Transverse colon (tissue), 4 donors: ENCODE measurements at regions of chr10 and their contacts with region 1.

Region 1: DNA sequence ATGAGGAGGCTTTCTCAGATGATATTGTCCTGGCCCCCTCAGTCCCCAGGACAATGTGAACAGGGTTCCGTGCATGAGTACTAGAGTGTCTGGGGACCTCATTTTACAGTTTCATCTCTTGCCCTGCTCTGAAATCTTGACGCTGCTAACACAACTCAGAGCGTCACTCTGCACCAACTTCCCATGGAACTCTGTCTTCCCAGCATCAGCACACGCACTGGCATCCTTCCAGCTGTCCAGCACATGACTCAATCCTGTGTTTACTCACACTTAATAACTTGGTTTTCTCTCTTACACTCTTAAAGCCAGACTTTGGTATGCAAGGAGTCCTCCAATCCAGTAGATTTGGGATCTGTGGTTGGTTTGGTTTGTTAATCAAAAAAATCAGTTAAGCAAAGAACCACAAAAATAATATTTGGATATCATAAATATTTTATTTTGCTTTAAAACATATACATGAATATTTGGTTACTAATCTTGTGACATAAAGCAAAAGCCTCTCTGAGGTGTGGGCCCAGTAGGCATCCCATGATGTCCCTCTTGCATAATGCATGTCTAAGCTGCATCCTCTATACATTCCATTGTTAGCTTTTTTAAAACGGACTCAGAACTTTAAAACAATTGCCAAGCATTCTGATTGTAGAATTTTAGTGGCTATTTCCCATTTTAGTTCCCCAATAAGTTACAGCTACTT is 131.0 kb downstream of the CXCL12 start:
- DNase-seq: no peak
- H3K4me3 ChIP-seq: no peak overlapping the region
- H3K27ac ChIP-seq: no peak overlapping the region
- H3K4me1 ChIP-seq: peaks cover 0 to 10% (median 1%) of the 10 kb centered on the region in 4 donors
- H3K27me3 ChIP-seq: no peaks in the 10 kb centered on the region
- CTCF ChIP-seq: no peak
- EP300 ChIP-seq: no peak
- POLR2A ChIP-seq: no peak

Region 2: GRCh38 chr10:44233561-44234482 is 20.1 kb before region 1 on chr10:
- in situ Hi-C with region 1: no loop called
- intact Hi-C with region 1: loop called (anchors 2 kb)
- DNase-seq: peak; percentile 15
- H3K4me3 ChIP-seq: no peak overlapping the region
- H3K27ac ChIP-seq: peak overlapping the region in 2 of 4 donors; percentile 29 to 53
- H3K4me1 ChIP-seq: peaks cover 0 to 4% (median 0%) of the 10 kb centered on the region in 4 donors
- H3K27me3 ChIP-seq: no peaks in the 10 kb centered on the region
- CTCF ChIP-seq: no peak
- EP300 ChIP-seq: no peak
- POLR2A ChIP-seq: no peak

Region 3: DNA sequence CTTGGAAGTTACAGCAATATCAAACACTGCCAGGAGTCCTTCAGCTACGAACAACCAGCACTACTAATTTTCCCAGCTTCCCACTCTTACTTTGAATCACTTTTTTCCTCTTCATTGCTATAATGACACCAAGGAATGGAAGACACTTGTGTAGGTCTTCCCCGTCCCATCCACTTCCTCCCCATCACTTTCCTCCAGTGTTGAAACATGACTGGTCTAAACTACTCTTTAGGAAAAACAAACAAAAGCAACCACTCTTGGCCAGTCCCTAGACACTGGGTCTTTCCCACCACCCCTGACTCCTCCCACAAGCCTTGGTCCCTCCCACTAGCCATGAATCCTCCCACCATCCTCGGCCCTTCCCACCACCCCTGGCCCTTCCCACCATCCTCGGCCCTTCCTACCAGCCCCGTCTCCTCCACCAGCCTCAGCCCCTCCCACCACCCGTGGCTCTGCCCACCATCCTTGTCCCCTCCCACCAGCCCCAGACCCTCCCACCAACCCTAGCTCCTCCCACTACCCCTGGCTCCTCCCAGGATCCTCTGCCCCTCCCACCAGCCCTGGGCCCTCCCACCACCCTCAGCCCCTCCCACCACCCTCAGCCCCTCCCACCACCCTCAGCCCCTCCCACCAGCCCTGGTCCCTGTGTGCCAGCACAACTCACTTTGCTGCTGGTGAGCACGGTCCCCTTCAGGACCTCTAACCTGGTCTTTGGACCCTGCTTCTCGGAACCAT is 62.4 kb after region 1 on chr10:
- in situ Hi-C with region 1: no loop called
- intact Hi-C with region 1: no loop called
- DNase-seq: no peak
- H3K4me3 ChIP-seq: no peak overlapping the region
- H3K27ac ChIP-seq: no peak overlapping the region
- H3K4me1 ChIP-seq: peaks cover 0 to under 1% (median under 1%) of the 10 kb centered on the region in 4 donors
- H3K27me3 ChIP-seq: no peaks in the 10 kb centered on the region
- CTCF ChIP-seq: no peak
- EP300 ChIP-seq: no peak
- POLR2A ChIP-seq: no peak